CD8-positive, alpha-beta T cell (primary cell): ENCODE measurements at regions of chr6 and their contacts with region 1.

Region 1: GRCh38 chr6:33288921-33289748 is at the starts of genes PFDN6 and WDR46:
- DNase-seq: peak; percentile 64 to 94 (median 84)
- ATAC-seq: peak; percentile 96
- H3K4me3 ChIP-seq: peak within 1 kb of the TSS; percentile 81 to 98
- H3K4me3 Mint-ChIP-seq: peak within 1 kb of the TSS; percentile 99
- H3K27ac ChIP-seq: peak within 1 kb of the TSS; percentile 59 to 82
- H3K27ac Mint-ChIP-seq: peak within 1 kb of the TSS; percentile 88
- H3K4me1 ChIP-seq: peaks cover 25% of the 10 kb centered on the region
- H3K4me1 Mint-ChIP-seq: peaks cover 41% of the 10 kb centered on the region
- H3K27me3 ChIP-seq: no peaks in the 10 kb centered on the region
- H3K27me3 Mint-ChIP-seq: no peaks in the 10 kb centered on the region
- CTCF ChIP-seq: no peak
- total RNA-seq, gene PFDN6: 9.4 to 11.2 TPM
- total RNA-seq, gene WDR46: 19.9 to 22.1 TPM

Region 2: GRCh38 chr6:33276864-33277662 is 12.1 kb before region 1 on chr6 and contains the start of gene B3GALT4:
- CTCF ChIA-PET with region 1: interaction called, 34 read pairs
- POLR2A ChIA-PET with region 1: interaction called, 46 read pairs
- intact Hi-C with region 1: loop called (anchors 1 kb)
- DNase-seq: peak; percentile 28 to 88 (median 68)
- ATAC-seq: peak; percentile 67
- H3K4me3 ChIP-seq: peak within 1 kb of the TSS; percentile 93 to 95
- H3K4me3 Mint-ChIP-seq: peak within 1 kb of the TSS; percentile 89
- H3K27ac ChIP-seq: peak within 1 kb of the TSS; percentile 79 to 95
- H3K27ac Mint-ChIP-seq: peak within 1 kb of the TSS; percentile 92
- H3K4me1 ChIP-seq: peaks cover 61% of the 10 kb centered on the region
- H3K4me1 Mint-ChIP-seq: peaks cover 71% of the 10 kb centered on the region
- H3K27me3 ChIP-seq: no peaks in the 10 kb centered on the region
- H3K27me3 Mint-ChIP-seq: no peaks in the 10 kb centered on the region
- CTCF ChIP-seq: peak; percentile 55
- total RNA-seq, gene B3GALT4: 7.9 to 8.8 TPM

Region 3: DNA sequence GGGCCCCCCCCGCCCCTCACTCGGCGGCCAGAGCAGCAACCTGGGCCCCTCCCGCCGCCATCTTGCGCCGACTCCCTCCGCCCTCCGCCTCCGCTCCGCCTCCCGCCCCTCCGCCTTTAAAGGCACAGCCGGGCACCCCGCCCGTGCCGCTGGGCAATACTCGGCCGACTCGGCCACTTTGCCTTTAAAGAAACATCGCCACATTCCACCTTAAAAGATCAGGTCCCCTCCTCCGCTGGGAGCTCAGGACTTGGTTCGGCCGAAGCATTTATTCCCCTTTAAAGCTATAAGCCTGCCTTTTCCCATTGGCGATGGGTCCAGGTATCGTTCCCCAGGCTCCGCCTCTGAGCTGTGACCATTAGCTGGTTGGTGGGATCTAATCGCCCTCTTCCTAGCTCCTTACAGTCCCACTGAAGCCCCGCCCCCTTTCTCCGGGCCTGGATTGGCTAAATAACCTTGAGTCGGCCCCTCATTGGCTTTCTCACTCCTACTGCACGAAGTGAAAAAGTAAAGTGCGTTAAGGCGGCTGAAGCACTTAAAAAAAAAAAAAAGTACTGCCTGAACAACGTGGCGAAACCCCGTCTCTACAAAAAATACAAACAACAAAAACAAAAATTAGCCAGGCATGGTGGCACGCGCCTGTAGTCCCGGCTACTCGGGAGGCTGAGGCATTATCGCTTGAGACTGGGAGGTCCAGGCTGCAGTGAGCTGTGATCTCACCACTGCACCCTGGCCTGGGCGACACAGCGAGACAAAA is 28.7 kb after region 1 on chr6 and contains the start of gene ZBTB22:
- CTCF ChIA-PET with region 1: interaction called, 8 read pairs
- POLR2A ChIA-PET with region 1: interaction called, 18 read pairs
- intact Hi-C with region 1: loop called (anchors 1 kb)
- DNase-seq: peak; percentile 91 to 98 (median 96)
- ATAC-seq: peak; percentile 61
- H3K4me3 ChIP-seq: peak within 1 kb of the TSS; percentile 72 to 78
- H3K4me3 Mint-ChIP-seq: peak within 1 kb of the TSS; percentile 99
- H3K27ac ChIP-seq: peak within 1 kb of the TSS; percentile 60 to 99
- H3K27ac Mint-ChIP-seq: peak within 1 kb of the TSS; percentile 97
- H3K4me1 ChIP-seq: peaks cover 65% of the 10 kb centered on the region
- H3K4me1 Mint-ChIP-seq: peaks cover 77% of the 10 kb centered on the region
- H3K27me3 ChIP-seq: no peaks in the 10 kb centered on the region
- H3K27me3 Mint-ChIP-seq: no peaks in the 10 kb centered on the region
- CTCF ChIP-seq: no peak
- total RNA-seq, gene ZBTB22: 8.8 to 9.3 TPM

Region 4: DNA sequence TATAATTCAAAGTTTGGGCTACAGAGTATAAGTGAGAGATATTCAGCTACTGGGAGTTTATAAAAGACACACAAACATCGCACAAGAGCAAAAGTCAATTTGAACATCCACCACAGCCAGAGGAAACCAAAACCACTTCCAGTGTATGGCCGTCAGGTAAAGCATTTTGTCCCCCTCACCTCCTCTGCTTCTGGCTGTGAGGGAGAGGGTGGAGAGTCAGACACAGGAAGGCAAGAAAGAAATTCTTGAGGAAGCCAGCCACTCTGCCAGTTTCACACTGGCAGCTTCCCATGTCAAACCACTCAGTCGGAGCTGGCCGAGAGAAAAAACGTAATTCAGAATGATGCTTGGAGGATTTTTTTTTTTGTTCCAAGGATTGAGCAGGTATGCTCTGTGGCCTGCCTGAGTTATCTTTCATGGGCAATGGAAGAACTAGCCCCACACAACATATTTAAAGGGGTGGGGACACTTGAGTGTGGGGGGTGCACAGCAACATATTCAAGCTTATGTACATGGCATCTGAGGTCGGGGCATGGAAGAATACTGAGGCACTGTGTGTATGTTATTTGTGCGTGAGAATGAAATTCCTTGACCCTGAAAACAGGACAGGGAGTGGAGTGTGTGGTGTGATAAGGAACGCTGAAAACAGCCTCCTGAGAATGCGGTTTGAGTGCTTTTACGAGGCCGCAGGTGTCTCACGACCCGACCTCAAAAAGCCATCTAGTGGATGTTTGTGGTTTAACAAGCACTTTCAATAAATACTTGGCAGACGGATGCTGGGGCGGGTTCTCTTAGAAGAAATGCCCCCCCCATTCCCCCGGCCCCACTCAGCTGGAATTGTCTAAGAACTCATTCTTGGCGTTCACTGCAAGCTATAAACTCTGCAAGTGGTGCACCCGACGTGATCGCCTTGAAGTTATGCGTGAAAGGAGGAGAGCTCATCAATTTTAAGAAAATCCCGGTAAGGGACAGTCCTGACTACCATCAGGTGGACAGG is 55.9 kb after region 1 on chr6:
- CTCF ChIA-PET with region 1: interaction called, 6 read pairs
- POLR2A ChIA-PET with region 1: interaction called, 23 read pairs
- intact Hi-C with region 1: loop called in 1 of 2 experiments (anchors 1 kb)
- DNase-seq: peak; percentile 33 to 94 (median 70)
- ATAC-seq: peak; percentile 58
- H3K4me3 ChIP-seq: peak overlapping the region; percentile 40 to 53
- H3K4me3 Mint-ChIP-seq: peak overlapping the region; percentile 82
- H3K27ac ChIP-seq: peak overlapping the region; percentile 75 to 95
- H3K27ac Mint-ChIP-seq: peak overlapping the region; percentile 94
- H3K4me1 ChIP-seq: peaks cover 32% of the 10 kb centered on the region
- H3K4me1 Mint-ChIP-seq: peaks cover 42% of the 10 kb centered on the region
- H3K27me3 ChIP-seq: no peaks in the 10 kb centered on the region
- H3K27me3 Mint-ChIP-seq: no peaks in the 10 kb centered on the region
- CTCF ChIP-seq: peak; percentile 72

Region 5: DNA sequence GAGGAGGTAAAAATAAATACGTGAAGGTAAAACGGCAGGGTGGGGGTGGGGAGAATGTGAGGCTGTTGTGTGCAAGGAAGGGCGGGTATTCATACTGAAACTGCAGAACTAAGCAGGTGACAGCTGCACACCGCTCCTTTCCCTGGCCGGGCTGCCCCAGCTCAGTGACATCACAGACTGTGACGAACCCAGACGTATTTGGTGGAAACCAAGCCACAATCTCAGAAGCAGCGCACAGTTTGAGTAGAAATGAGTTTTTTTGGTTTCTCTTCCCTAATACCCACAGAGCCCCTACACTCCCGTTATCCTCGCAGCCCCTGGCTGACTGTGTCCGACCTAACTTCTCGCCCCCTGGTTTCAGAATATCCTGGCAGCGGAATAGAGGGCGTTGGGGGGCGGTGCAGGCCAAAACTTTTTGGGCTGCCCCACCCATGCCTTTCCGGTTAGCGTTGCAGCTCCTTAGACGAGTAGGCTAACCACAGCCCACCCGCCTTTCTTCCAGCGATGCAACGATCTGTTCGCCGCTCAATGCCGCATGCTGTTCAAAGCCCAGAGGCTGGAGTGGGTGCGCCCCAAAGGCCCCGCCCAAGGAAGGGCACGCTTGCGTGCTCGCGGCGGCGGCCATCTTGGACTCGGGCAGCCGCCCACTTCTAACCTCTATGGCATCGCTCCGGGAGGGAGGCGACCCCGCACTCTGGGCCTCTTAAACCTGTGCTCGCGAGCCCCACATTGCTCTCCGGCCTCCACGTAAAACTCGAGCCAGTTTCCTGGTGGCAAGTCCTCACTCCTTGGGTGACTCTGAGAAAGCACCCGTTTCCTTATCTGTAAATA is 281.9 kb after region 1 on chr6:
- CTCF ChIA-PET with region 1: no interaction called
- POLR2A ChIA-PET with region 1: no interaction called
- intact Hi-C with region 1: loop called in 1 of 2 experiments (anchors 1 kb)
- DNase-seq: peak; percentile 86 to 98 (median 92)
- ATAC-seq: peak; percentile 86
- H3K4me3 ChIP-seq: peak overlapping the region; percentile 57 to 67
- H3K4me3 Mint-ChIP-seq: peak overlapping the region; percentile 92
- H3K27ac ChIP-seq: peak overlapping the region; percentile 93 to 99
- H3K27ac Mint-ChIP-seq: peak overlapping the region; percentile 100
- H3K4me1 ChIP-seq: peaks cover 20% of the 10 kb centered on the region
- H3K4me1 Mint-ChIP-seq: peaks cover 29% of the 10 kb centered on the region
- H3K27me3 ChIP-seq: no peaks in the 10 kb centered on the region
- H3K27me3 Mint-ChIP-seq: no peaks in the 10 kb centered on the region
- CTCF ChIP-seq: no peak

Region 6: GRCh38 chr6:34067814-34068213 is 778.7 kb after region 1 on chr6:
- CTCF ChIA-PET with region 1: no interaction called
- POLR2A ChIA-PET with region 1: no interaction called
- intact Hi-C with region 1: no loop called
- DNase-seq: peak in 2 of 9 experiments; percentile 18 to 23
- ATAC-seq: no peak
- H3K4me3 ChIP-seq: no peak overlapping the region
- H3K4me3 Mint-ChIP-seq: no peak overlapping the region
- H3K27ac ChIP-seq: no peak overlapping the region
- H3K27ac Mint-ChIP-seq: no peak overlapping the region
- H3K4me1 ChIP-seq: no peaks in the 10 kb centered on the region
- H3K4me1 Mint-ChIP-seq: no peaks in the 10 kb centered on the region
- H3K27me3 ChIP-seq: peaks cover 0 to 13% of the 10 kb centered on the region in 2 experiments
- H3K27me3 Mint-ChIP-seq: peaks cover 11% of the 10 kb centered on the region
- CTCF ChIP-seq: no peak